Activated naive CD4-positive, alpha-beta T cell treated with anti-CD3 and anti-CD28 coated beads for 36 hours (primary cell): ENCODE measurements at regions of chr21 and their contacts with region 1.

Region 1: GRCh38 chr21:29232601-29233546 is 65.8 kb upstream of the BACH1 start:
- DNase-seq: no peak
- H3K4me3 Mint-ChIP-seq: peak overlapping the region; percentile 13
- H3K27ac Mint-ChIP-seq: peak overlapping the region; percentile 79
- H3K4me1 Mint-ChIP-seq: peaks cover 53% of the 10 kb centered on the region
- H3K27me3 Mint-ChIP-seq: peaks cover 4% of the 10 kb centered on the region

Region 2: GRCh38 chr21:28992526-28993292 is 240.2 kb before region 1 on chr21 and contains the start of gene LTN1:
- CTCF ChIA-PET with region 1: no interaction called
- intact Hi-C with region 1: loop called (anchors 5 kb)
- DNase-seq: peak; percentile 100
- H3K4me3 Mint-ChIP-seq: peak within 1 kb of the TSS; percentile 99
- H3K27ac Mint-ChIP-seq: peak within 1 kb of the TSS; percentile 97
- H3K4me1 Mint-ChIP-seq: peaks cover 51% of the 10 kb centered on the region
- H3K27me3 Mint-ChIP-seq: no peaks in the 10 kb centered on the region
- total RNA-seq, gene LTN1: 18.5 to 21.2 TPM

Region 3: DNA sequence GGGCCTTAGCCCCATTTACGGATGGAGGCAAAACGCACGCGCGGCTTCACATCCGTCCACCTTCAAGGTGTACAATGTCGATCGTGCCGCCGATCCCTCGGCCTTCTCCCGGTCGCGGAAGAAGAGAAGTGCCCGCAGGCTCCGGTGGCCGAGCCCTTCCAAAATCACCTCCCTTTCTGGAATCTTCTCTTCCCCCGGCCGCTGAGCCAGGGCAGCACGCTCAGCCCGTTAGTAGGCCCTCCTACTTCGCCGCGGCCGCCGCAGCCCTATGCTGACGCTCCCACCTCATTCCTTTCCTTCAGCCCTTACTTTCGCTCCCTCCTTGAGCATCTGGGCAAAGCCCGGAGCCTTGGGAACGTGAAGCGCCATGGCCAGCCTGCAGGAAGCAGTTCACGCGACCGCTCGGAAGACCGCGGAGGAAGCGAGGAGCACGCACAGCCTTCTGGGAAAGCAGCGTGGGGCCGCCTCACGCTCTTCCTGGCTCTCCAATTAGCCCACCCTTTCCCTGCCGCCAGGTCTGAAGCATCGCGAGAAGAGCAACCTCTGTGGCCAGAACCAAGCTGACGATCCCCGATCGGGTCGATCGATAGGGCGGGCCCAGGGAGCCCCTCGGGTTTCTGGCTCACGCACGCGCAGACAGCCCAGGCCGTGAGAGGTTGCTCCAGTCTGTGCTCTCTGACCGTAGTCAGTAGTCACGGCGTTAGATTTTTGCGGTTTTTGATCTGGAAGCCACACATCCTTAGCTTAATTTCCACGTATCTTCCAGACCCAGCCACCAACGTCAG is 159.5 kb before region 1 on chr21 and contains the start of gene CCT8:
- CTCF ChIA-PET with region 1: interaction called, 3 read pairs
- intact Hi-C with region 1: loop called (anchors 1 kb)
- DNase-seq: peak; percentile 99
- H3K4me3 Mint-ChIP-seq: peak within 1 kb of the TSS; percentile 94
- H3K27ac Mint-ChIP-seq: peak within 1 kb of the TSS; percentile 95
- H3K4me1 Mint-ChIP-seq: peaks cover 46% of the 10 kb centered on the region
- H3K27me3 Mint-ChIP-seq: no peaks in the 10 kb centered on the region
- total RNA-seq, gene CCT8: 482 to 515 TPM

Region 4: GRCh38 chr21:29195981-29196669 is 36.7 kb before region 1 on chr21:
- CTCF ChIA-PET with region 1: interaction called, 9 read pairs
- intact Hi-C with region 1: loop called (anchors 1 kb)
- DNase-seq: peak; percentile 91
- H3K4me3 Mint-ChIP-seq: peak overlapping the region; percentile 63
- H3K27ac Mint-ChIP-seq: peak overlapping the region; percentile 90
- H3K4me1 Mint-ChIP-seq: peaks cover 36% of the 10 kb centered on the region
- H3K27me3 Mint-ChIP-seq: no peaks in the 10 kb centered on the region

Region 5: GRCh38 chr21:29298348-29299045 is 65.6 kb after region 1 on chr21 and contains the start of gene BACH1:
- CTCF ChIA-PET with region 1: interaction called, 12 read pairs
- intact Hi-C with region 1: loop called (anchors 1 kb)
- DNase-seq: peak; percentile 87
- H3K4me3 Mint-ChIP-seq: peak within 1 kb of the TSS; percentile 78
- H3K27ac Mint-ChIP-seq: peak within 1 kb of the TSS; percentile 76
- H3K4me1 Mint-ChIP-seq: peaks cover 66% of the 10 kb centered on the region
- H3K27me3 Mint-ChIP-seq: no peaks in the 10 kb centered on the region
- total RNA-seq, gene BACH1: 22.6 to 23.2 TPM

Region 6: GRCh38 chr21:29436143-29436542 is 203.3 kb after region 1 on chr21:
- CTCF ChIA-PET with region 1: no interaction called
- intact Hi-C with region 1: loop called (anchors 1 kb)
- DNase-seq: peak; percentile 78
- H3K4me3 Mint-ChIP-seq: peak overlapping the region; percentile 76
- H3K27ac Mint-ChIP-seq: peak overlapping the region; percentile 83
- H3K4me1 Mint-ChIP-seq: peaks cover 50% of the 10 kb centered on the region
- H3K27me3 Mint-ChIP-seq: no peaks in the 10 kb centered on the region